ENCODE measurements at regions of chr6 and their contacts with region 1.

Region 1: DNA sequence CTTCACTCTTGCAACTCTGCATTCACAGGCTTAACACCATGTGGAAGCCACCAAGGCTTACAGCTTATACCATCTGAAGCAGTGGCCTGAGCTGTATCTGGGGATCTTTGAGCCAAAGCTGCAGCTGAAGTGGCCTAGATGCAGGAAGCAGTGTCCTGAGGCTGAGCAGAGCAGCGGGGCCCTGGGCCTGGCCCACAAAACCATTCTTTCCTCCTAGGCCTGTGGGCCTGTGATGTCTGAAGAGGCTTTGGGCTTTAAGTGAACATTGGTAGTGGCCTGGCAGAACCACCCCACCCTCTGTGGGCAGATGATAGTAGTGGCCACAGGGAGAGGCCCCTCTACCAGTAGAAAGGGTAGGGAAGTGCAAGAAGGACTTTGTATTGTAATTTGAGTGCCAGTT is 6.9 kb upstream of the PREP start:
- DNase-seq: no peak
- ATAC-seq: no peak
- H3K4me3 ChIP-seq: no peak overlapping the region
- H3K27ac ChIP-seq: no peak overlapping the region
- H3K4me1 ChIP-seq: no peaks in the 10 kb centered on the region
- H3K27me3 ChIP-seq: no peaks in the 10 kb centered on the region
- CTCF ChIP-seq: no peak

Region 2: GRCh38 chr6:105097288-105097687 is 312.4 kb before region 1 on chr6:
- intact Hi-C with region 1: loop called in 1 of 2 experiments (anchors 5 kb)
- DNase-seq: no peak
- ATAC-seq: no peak
- H3K4me3 ChIP-seq: no peak overlapping the region
- H3K27ac ChIP-seq: no peak overlapping the region
- H3K4me1 ChIP-seq: peaks cover 8% of the 10 kb centered on the region
- H3K27me3 ChIP-seq: no peaks in the 10 kb centered on the region
- CTCF ChIP-seq: no peak